ENCODE measurements at regions of chr12 and their contacts with region 1.

Region 1: GRCh38 chr12:68610370-68611093 is at the start of gene RAP1B:
- DNase-seq: peak; percentile 87
- ATAC-seq: peak; percentile 83
- H3K4me3 Mint-ChIP-seq: peak within 1 kb of the TSS; percentile 98
- H3K27ac Mint-ChIP-seq: peak within 1 kb of the TSS; percentile 99
- H3K4me1 Mint-ChIP-seq: peaks cover 34% of the 10 kb centered on the region
- H3K27me3 Mint-ChIP-seq: no peaks in the 10 kb centered on the region
- CTCF ChIP-seq: no peak
- total RNA-seq, gene RAP1B: 187 to 192 TPM

Region 2: GRCh38 chr12:68364893-68365725 is 245.4 kb before region 1 on chr12:
- CTCF ChIA-PET with region 1: interaction called, 3 read pairs
- POLR2A ChIA-PET with region 1: interaction called, 3 read pairs
- intact Hi-C with region 1: loop called (anchors 10 kb)
- DNase-seq: peak; percentile 94
- ATAC-seq: peak; percentile 94
- H3K4me3 Mint-ChIP-seq: peak overlapping the region; percentile 78
- H3K27ac Mint-ChIP-seq: peak overlapping the region; percentile 94
- H3K4me1 Mint-ChIP-seq: peaks cover 58% of the 10 kb centered on the region
- H3K27me3 Mint-ChIP-seq: no peaks in the 10 kb centered on the region
- CTCF ChIP-seq: no peak

Region 3: DNA sequence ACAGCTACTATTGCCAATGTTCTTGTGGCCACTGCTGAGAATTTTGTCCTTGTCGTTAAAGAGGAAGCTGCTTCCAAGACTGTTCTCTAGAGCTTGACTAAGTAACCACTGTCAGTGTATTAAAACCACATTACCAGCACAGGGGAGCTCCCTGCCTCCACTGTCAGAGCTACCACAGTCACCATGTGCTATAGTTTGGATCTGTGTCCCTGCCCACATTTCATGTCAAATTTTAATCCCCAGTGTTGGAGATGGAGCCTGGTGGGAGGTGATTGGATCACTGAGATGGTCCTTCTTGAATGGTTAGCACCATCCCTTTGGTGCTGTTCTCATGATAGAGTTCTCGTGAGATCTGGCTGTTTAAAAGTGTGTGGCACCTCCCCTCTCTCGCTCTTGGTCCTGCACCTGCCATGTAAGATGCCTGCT is 23.1 kb before region 1 on chr12:
- CTCF ChIA-PET with region 1: interaction called, 3 read pairs
- POLR2A ChIA-PET with region 1: interaction called, 10 read pairs
- intact Hi-C with region 1: no loop called
- DNase-seq: peak; percentile 79
- ATAC-seq: peak; percentile 88
- H3K4me3 Mint-ChIP-seq: peak overlapping the region; percentile 12
- H3K27ac Mint-ChIP-seq: peak overlapping the region; percentile 78
- H3K4me1 Mint-ChIP-seq: peaks cover 45% of the 10 kb centered on the region
- H3K27me3 Mint-ChIP-seq: no peaks in the 10 kb centered on the region
- CTCF ChIP-seq: no peak

Region 4: GRCh38 chr12:68628698-68629097 is 18.2 kb after region 1 on chr12:
- CTCF ChIA-PET with region 1: interaction called, 3 read pairs
- POLR2A ChIA-PET with region 1: interaction called, 33 read pairs
- intact Hi-C with region 1: no loop called
- DNase-seq: no peak
- ATAC-seq: no peak
- H3K4me3 Mint-ChIP-seq: no peak overlapping the region
- H3K27ac Mint-ChIP-seq: peak overlapping the region; percentile 83
- H3K4me1 Mint-ChIP-seq: peaks cover 81% of the 10 kb centered on the region
- H3K27me3 Mint-ChIP-seq: no peaks in the 10 kb centered on the region
- CTCF ChIP-seq: no peak

Region 5: DNA sequence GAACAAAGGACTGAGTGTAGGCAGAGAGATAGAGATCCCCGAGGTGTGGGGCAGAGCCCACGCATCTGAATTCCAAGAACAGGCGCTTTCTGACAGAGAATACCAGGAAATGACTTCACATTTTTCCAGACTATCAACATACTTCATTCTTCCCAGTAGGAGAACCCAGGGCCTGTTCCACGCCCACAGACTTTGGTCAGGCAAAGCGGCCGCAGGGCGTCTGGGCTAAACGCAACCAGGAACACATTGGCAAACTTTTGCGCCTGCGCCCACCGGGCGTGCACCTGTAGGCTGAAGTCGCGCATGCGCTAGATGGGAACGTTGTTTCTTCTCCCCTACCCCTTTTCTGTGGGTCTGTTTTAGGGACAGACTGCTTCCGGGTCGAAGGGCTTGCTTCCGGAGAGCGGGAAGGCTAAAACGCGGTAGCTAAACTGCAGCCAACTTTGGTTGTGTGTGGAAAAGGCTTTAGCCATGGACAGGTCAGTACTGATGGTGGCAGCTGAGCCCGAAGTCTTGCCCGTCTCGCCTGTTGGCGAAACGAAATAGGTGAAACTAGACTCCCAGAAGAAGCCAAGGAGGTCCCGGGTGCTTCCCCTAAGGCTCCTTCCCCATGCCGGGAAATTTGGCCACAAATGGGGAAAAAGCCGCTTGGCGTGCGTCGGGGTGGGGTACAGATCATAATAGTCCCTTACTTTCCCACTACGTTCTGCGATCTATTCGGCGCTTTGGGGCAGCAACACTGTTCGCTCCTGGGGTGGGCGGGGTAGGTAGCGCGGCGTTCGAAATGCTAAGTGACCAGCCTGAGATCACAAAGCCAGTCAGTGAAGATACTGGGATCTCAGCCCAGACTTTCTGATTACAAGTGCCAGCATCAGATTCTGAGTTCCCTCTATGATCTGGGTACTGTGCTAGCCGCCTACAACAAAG is 76.3 kb after region 1 on chr12 and contains the start of gene NUP107:
- CTCF ChIA-PET with region 1: no interaction called
- POLR2A ChIA-PET with region 1: interaction called, 5 read pairs
- intact Hi-C with region 1: loop called (anchors 5 kb)
- DNase-seq: peak; percentile 98
- ATAC-seq: peak; percentile 94
- H3K4me3 Mint-ChIP-seq: peak within 1 kb of the TSS; percentile 97
- H3K27ac Mint-ChIP-seq: peak within 1 kb of the TSS; percentile 99
- H3K4me1 Mint-ChIP-seq: peaks cover 44% of the 10 kb centered on the region
- H3K27me3 Mint-ChIP-seq: no peaks in the 10 kb centered on the region
- CTCF ChIP-seq: no peak
- total RNA-seq, gene NUP107: 142 to 143 TPM

Measured in activated CD8-positive, alpha-beta T cell treated with anti-CD3 and anti-CD28 coated beads for 36 hours (primary cell).